ENCODE measurements at regions of chr6 and their contacts with region 1.

Region 1: DNA sequence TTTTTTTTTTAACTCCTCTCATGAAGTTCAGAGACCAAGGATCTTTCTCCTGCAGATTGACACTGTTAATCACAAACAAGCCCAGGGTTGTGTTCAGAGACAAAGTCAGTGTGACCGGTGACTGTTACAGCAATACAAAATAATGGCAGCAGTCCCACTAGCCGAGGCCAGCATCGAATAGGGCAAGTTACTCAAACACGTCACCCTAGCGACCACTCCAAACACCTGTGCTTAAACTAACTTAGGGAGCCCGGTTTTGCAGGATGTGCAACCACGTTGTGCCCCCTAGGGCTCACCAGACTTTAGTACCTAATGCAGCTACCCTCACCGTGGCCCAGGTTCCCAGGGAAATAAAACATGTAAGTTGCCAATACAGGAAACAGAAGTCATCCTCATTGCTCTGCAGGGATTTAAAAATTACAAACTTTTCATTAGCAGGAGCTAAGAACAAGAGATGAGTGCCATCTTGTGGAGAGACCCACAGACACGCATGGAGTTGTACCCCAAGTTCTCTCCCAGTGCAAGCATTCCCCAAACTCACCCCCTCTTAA is 38.1 kb downstream of the FAM50B start:
- DNase-seq: no peak
- H3K4me3 ChIP-seq: no peak overlapping the region
- H3K27ac ChIP-seq: no peak overlapping the region
- H3K27me3 ChIP-seq: no peaks in the 10 kb centered on the region
- CTCF ChIP-seq: peak in 55 of 56 donors; percentile 35 to 77 (median 62)

Region 2: GRCh38 chr6:3751730-3752542 is 135.3 kb before region 1 on chr6:
- intact Hi-C with region 1: loop called in 1 of 2 experiments (anchors 5 kb)
- DNase-seq: peak in 8 of 10 donors; percentile 26 to 83 (median 66)
- H3K4me3 ChIP-seq: peak overlapping the region; percentile 47 to 80 (median 72)
- H3K27ac ChIP-seq: peak overlapping the region in 58 of 59 donors; percentile 22 to 98 (median 92)
- H3K27me3 ChIP-seq: no peaks in the 10 kb centered on the region
- CTCF ChIP-seq: peak in 39 of 56 donors; percentile 13 to 59 (median 28)

Region 3: DNA sequence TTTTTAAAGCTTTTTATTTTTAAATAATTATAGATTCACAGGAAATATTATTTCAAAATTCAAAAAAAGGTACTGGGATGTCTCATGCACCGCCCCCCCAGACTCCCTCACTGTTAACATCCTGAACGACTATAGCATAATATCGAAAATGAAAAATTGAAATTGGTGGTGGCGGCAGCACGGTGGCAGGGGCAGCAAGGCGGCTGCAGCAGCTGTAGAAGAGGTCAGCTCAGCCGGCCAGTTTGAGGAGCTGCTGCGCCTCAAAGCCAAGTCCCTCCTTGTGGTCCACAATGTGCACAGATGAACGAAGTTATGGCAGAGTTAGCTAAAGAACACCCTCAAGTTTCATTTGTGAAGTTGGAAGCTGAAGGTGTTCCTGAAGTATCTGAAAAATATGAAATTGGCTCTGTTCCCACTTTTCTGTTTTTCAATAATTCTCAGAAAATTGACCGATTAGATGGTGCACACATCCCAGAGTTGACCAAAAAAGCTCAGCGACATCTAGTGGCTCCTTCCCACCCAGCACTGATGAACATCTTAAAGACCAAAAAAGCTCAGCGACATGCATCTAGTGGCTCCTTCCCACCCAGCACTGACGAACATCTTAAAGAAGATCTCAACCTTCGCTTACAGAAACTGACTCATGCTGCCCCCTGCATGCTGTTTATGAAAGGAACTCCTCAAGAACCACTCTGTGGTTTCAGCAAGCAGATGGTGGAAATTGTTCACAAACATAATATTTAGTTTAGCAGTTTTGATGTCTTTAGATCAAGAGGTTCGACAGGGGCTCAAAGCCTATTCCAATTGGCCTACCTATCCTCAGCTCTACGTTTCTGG is 90.9 kb after region 1 on chr6:
- intact Hi-C with region 1: loop called in 1 of 2 experiments (anchors 10 kb)
- DNase-seq: peak in 6 of 10 donors; percentile 6 to 67 (median 42)
- H3K4me3 ChIP-seq: no peak overlapping the region
- H3K27ac ChIP-seq: no peak overlapping the region
- H3K27me3 ChIP-seq: no peaks in the 10 kb centered on the region
- CTCF ChIP-seq: peak; percentile 43 to 81 (median 69)

Region 4: DNA sequence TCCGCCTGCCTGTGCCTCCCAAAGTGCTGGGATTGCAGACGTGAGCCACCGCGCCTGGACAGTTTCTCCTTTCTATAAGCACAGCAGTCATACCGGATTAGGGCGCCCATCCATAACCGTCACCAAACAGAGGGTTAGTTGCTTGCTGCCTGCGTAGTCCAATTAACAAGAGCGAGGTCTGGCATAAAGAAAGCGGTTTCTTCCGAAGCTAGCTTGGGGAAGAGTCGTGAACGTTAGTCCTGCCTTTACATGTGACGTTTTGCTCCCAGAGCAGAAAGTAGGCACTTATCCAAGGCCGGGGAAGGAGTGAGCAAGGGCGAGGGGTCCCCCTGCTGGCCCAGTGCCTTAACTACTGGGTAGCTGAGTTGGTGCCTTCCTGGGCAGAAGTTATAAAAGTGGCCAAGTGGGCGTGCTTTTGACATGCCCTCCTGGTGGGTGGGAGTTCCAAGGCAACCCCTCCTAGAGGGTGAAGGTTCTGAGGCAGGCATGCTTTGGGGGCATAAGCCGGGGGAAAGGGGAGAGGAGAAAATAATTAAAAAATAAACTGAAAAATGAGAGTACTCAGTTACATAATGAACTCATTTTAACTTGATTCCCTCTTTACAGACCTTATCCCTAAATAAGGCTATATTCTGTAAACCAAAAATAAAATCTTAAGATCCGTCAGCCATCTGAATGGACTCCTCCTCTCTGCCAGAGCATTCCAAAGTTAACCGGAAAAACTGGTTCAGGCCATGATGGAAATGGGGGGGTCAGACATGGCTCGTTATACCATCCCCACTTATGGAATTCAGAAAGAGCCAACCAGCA is 103.7 kb after region 1 on chr6:
- intact Hi-C with region 1: loop called in 1 of 2 experiments (anchors 5 kb)
- DNase-seq: peak; percentile 77 to 91 (median 87)
- H3K4me3 ChIP-seq: peak overlapping the region; percentile 36 to 72 (median 59)
- H3K27ac ChIP-seq: peak overlapping the region in 44 of 59 donors; percentile 9 to 83 (median 67)
- H3K27me3 ChIP-seq: no peaks in the 10 kb centered on the region
- CTCF ChIP-seq: peak; percentile 39 to 93 (median 84)

Region 5: DNA sequence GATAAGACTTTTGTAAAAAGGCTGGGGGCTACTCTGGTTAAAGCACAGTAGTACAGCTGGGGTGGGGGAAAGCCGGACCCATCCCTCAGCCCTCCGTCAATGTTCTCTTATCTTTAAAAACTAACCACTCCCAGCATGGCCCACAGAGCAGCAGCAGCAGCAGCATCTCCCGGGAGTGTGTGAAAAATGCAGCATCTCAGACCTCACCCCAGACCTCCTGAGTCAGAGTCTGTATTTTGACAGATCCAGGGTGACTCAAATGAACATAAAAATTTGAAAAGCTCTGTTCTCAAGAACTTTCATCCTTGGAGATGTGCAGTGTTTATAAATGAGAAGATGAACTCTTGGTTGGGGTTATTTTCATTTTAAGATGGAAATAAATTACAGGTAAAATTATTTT is 525.8 kb after region 1 on chr6:
- intact Hi-C with region 1: no loop called
- DNase-seq: no peak
- H3K4me3 ChIP-seq: no peak overlapping the region
- H3K27ac ChIP-seq: no peak overlapping the region
- H3K27me3 ChIP-seq: no peaks in the 10 kb centered on the region
- CTCF ChIP-seq: no peak

Measured in dorsolateral prefrontal cortex (tissue), 120 donors.